ENCODE measurements at regions of chr9 and their contacts with region 1.

Region 1: DNA sequence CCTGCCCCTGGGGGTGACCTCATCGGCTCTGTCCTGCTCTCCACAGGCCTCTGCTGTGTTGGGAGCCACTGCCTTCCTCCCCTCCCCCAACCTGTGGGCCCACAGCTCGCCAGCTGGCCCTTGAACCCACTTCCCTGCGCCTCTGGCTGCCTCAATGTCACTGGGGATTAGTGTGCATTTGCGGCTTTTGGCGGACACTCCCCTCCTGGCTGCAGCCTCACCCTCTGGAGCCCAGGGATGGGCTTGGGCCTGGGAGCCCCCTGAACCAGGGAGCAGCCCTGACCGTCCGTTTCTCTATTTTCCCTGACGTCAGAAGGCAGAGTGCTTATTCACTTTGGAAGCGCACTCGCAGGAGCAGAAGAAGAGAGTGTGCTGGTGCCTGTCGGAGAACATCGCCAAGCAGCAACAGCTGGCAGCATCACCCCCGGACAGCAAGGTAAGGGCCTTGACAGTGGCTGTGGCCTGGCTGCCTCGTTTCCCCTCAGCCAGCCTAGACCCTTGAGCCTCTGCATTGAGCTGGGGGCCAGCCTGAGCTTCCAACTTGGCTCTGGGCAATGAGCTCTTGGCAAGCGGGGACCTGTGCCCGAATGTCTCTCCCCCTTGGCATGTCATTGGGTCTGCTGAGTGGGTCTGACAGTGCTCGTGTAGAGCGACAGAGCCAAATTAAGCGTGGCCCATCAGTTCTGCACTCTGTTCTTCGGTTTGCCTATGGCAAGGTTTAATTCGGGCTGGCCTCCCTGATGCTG is 73.1 kb downstream of the RGS3 start:
- DNase-seq: peak in 41 of 42 donors; percentile 87 to 98 (median 95)

Region 2: DNA sequence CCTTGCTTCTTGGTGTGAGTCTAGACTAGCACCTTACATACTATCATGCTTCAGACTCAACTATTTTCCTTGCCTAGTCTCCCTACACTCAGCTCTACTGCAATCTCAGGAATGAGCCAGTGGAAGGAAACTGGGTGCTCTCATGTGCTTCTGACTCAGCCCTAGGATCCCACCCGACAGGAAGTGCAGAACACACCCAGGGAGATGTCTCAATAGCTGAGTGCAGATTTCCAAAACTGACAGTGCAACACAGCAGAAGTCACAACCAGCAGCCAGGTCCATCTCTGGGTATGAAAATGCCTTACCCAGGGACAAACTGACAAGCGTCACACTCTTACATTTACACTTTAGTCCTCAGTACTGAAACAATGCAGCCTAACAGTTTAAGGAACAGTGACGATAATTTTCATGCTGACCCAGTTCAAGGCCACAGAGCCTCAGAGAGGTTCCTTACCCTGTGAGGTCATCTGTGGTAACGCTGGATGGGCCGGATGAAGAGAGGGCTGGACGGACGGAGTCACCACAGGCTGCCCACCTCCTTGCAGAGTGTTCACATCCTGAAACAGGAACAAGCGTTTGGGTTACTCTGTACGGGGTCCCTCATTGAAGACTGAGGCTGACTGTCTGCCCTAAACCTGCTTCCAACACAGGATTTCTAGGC is 348.6 kb before region 1 on chr9:
- intact Hi-C with region 1: no loop called
- DNase-seq: peak in 41 of 42 donors; percentile 22 to 85 (median 63)

Region 3: DNA sequence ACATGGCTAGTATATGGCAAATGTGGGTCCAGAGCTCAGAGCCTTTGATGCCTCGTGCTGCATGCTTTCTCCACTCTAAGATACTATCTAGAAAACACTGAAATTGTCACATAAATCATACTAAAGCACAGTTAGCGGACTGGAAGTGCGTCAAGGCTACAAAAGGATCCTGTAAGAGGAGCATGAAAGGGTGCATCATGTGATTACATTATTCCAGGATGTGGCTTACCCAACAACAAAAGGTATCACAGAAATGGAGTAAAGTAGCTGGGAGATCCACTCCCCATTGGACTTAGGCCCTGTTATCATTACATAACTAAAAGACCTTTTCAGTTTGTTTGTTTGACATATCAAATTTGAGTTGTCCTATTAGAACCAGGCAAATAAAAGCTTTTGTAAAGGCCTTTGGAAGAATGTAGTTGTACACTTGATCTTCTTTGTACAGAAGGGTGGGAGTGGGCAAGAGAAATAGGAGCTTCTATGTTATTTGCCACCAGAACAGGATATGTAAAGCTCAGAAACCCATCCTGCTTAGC is 308.5 kb before region 1 on chr9:
- intact Hi-C with region 1: no loop called
- DNase-seq: no peak

Region 4: DNA sequence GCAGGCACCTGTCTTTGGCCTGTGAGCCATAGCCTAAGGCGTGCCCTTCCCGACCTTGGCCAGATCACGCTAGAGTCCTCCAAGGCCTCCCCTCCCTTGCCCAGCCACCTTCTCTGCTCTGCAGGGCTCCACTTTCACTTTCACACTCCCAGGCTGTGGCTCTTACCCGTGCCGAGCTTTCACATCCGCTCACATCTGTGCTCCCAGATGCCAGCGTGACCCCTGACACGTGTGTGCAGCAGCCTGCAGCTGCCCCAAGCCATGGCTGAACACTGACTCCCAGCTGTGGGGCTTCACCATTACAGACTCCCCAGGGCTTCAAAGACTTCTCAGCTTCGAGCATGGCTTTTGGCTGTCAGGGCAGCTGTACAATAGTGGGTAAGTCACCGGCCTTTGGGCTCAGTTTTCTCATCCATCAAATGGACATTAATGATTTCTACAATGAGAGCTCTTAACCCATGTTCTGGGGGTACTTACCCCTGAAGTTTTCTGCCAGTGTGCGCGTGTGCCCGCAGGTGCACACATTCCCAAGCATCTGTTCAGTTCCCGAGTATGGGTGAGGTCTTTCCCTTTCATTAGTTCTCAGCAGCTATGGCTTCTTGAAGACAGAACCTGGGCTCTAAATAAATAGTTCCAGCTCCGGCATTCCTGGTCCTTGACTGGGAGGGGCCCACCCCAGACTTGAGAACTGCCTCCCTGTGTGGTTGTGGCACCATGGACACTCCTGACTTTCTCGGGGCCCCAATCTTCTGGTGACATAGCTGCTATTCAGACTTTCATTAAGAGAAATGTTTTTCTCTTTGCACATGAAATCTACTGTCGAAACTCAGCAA is 45.4 kb after region 1 on chr9:
- intact Hi-C with region 1: loop called (anchors 5 kb)
- DNase-seq: peak; percentile 57 to 93 (median 82)

Measured in head of caudate nucleus (tissue), 42 donors.